CD8-positive, alpha-beta memory T cell (primary cell): ENCODE measurements at regions of chr10 and their contacts with region 1.

Region 1: DNA sequence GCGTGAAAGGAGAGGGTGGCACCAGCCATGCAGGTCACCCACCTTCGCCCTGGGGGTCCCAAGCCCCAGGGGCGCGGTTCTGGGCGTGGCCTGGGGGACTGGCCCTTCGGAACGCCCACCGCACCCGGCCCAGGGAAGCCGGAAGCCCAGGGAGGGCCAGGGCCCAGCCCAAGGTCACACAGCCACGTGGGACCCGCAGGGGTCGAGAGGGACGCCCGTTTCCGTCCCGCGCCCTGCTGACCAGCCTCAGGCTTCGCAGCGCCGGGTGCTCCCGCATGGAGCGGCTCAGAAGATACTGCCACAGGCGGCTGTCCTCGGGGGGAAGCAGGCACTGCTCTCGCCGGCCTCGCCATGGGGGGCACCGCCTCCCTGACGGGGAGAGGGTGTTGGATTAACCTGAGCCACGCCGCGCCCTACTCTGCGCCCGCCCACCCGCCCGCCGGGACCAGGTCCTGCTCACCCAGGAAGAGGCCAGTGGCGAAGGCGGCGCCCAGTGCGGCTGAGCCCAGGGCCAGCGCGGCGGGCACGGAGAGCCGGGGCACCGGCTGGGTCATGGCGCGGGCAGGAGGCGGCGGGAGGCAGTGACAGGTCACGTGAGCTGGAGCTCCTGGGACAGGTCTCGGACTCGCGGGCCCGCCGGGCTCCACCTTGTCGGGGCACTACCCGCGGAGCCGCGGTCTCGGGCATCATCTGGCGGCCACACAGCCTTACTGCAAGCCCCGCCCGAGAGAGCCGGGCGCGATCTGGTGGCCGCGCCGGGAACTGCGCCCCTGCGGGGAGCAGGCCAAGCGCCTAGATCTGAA is at the start of gene COMTD1:
- DNase-seq: peak; percentile 91 to 95 (median 92)
- H3K4me3 ChIP-seq: peak within 1 kb of the TSS; percentile 75
- H3K4me3 Mint-ChIP-seq: peak within 1 kb of the TSS; percentile 74 to 90 (median 84)
- H3K27ac ChIP-seq: peak within 1 kb of the TSS; percentile 66
- H3K27ac Mint-ChIP-seq: peak within 1 kb of the TSS; percentile 85 to 99 (median 90)
- H3K4me1 ChIP-seq: peaks cover 14% of the 10 kb centered on the region
- H3K4me1 Mint-ChIP-seq: peaks cover 9 to 27% (median 10%) of the 10 kb centered on the region in 3 donors
- H3K27me3 ChIP-seq: no peaks in the 10 kb centered on the region
- H3K27me3 Mint-ChIP-seq: no peaks in the 10 kb centered on the region
- total RNA-seq, gene COMTD1: 43.9 to 47.9 TPM

Region 2: DNA sequence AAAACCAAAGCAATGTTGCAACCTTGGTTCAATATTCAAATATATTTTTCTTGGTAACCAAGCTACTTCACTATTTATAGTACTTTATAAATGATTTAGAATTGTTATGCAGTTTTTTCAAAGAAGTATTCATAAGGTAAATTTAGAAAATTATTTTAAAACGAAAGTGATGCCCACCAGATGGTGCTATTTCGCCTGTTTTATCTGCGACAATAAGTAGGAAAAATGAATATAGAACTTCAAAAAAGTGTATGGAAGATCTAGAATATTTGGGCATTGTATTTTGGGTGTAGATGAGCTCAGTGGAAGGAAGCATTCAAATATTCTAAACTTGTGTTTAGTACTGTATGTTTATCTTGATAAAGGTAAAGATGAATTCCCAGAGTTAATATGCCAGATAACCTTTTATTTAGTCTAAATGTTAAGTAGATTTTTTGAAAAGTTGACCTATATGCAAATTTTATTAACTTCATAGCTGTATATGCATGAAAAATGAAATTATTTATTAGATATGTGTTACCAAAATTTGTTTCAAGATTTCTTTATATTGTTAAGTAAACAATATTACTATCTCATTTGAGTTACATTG is 991.4 kb before region 1 on chr10:
- CTCF ChIA-PET with region 1: interaction called, 25 read pairs
- POLR2A ChIA-PET with region 1: interaction called, 3 read pairs
- DNase-seq: peak in 2 of 5 donors; percentile 11 to 28
- H3K4me3 ChIP-seq: no peak overlapping the region
- H3K4me3 Mint-ChIP-seq: no peak overlapping the region
- H3K27ac ChIP-seq: no peak overlapping the region
- H3K27ac Mint-ChIP-seq: no peak overlapping the region
- H3K4me1 ChIP-seq: no peaks in the 10 kb centered on the region
- H3K4me1 Mint-ChIP-seq: peaks cover 0 to 4% (median 4%) of the 10 kb centered on the region in 3 donors
- H3K27me3 ChIP-seq: no peaks in the 10 kb centered on the region
- H3K27me3 Mint-ChIP-seq: no peaks in the 10 kb centered on the region

Region 3: DNA sequence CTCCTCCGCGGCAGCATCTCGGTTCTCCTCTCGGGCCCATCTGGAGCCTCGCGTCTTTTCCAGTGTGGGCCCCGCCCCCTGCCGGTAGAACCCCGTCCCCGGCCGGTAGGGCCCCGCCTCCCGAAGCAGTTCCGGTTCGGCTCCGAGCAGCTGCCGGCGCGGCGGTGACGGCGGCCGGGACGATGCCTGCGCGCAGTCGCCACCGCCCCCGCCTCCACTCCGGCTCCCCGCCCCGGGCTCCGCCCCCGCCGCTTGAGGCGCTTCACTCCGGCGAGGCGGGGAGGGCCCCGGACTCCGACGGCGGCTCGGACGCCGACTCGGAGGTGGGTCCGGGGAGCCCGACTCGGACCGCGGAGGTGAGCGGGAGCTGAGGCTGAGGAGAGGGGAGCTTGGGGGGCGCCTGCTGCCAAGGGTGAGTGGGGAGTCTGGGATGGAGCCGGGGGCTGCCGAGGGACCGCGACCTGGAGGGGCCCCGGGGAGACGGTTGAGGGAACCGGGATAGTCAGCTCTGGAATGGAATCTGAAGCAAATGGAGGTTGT is 124.1 kb before region 1 on chr10 and contains the start of gene SAMD8:
- CTCF ChIA-PET with region 1: interaction called, 14 read pairs
- POLR2A ChIA-PET with region 1: no interaction called
- DNase-seq: peak; percentile 94 to 97 (median 95)
- H3K4me3 ChIP-seq: peak within 1 kb of the TSS; percentile 90
- H3K4me3 Mint-ChIP-seq: peak within 1 kb of the TSS; percentile 84 to 99 (median 90)
- H3K27ac ChIP-seq: peak within 1 kb of the TSS; percentile 93
- H3K27ac Mint-ChIP-seq: peak within 1 kb of the TSS; percentile 89 to 99 (median 95)
- H3K4me1 ChIP-seq: peaks cover 37% of the 10 kb centered on the region
- H3K4me1 Mint-ChIP-seq: peaks cover 50 to 60% (median 57%) of the 10 kb centered on the region in 3 donors
- H3K27me3 ChIP-seq: no peaks in the 10 kb centered on the region
- H3K27me3 Mint-ChIP-seq: no peaks in the 10 kb centered on the region
- total RNA-seq, gene SAMD8: 15.0 to 16.4 TPM